Aorta (tissue), 5 donors: ENCODE measurements at regions of chr7 and their contacts with region 1.

Region 1: GRCh38 chr7:151759591-151760042 is 117.3 kb downstream of the PRKAG2 start:
- DNase-seq: no peak
- ATAC-seq: peak; percentile 80
- H3K4me3 ChIP-seq: no peak overlapping the region
- H3K27ac ChIP-seq: no peak overlapping the region
- H3K4me1 ChIP-seq: no peaks in the 10 kb centered on the region
- H3K27me3 ChIP-seq: no peaks in the 10 kb centered on the region

Region 2: DNA sequence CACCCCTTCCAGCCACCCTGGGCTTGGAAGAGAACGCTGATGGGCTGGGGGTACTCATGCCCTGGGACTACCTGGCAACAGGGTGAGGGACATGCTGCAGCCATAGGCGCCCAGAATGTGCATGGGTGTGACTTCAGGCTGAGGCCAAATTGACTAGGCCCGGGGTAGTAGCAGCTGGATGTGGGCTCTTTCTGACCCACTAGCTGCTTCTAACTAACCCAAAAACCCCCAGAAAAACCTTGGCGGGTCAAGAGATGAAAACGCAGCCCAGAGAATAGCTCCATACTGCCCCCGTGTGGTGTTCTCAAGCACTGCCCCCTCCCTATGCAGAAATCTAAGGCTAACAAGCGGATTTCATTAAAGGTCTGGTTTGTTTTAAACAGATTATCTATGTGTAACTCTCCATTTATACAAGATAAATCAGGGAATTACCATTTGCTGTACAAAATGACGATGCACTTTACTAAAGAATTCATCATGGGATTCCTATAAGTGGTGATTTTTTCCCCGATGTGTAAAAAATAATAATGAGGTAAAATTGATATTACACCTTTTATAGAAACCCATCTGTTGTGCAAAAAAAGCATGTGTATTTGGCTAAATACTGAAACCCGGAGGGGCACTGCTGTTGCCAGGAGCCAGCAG is 515.3 kb before region 1 on chr7:
- intact Hi-C with region 1: loop called in 1 of 2 experiments (anchors 10 kb)
- DNase-seq: peak in 1 of 2 donors; percentile 79
- ATAC-seq: no peak
- H3K4me3 ChIP-seq: no peak overlapping the region
- H3K27ac ChIP-seq: no peak overlapping the region
- H3K4me1 ChIP-seq: no peaks in the 10 kb centered on the region
- H3K27me3 ChIP-seq: no peaks in the 10 kb centered on the region

Region 3: GRCh38 chr7:151459726-151460473 is 299.7 kb before region 1 on chr7:
- intact Hi-C with region 1: loop called in 1 of 2 experiments (anchors 5 kb)
- DNase-seq: peak; percentile 85 to 93
- ATAC-seq: peak; percentile 93
- H3K4me3 ChIP-seq: no peak overlapping the region
- H3K27ac ChIP-seq: peak overlapping the region in 1 of 2 donors; percentile 85
- H3K4me1 ChIP-seq: no peaks in the 10 kb centered on the region
- H3K27me3 ChIP-seq: no peaks in the 10 kb centered on the region

Region 4: GRCh38 chr7:151570366-151570915 is 189.2 kb before region 1 on chr7:
- intact Hi-C with region 1: loop called (anchors 5 kb)
- DNase-seq: no peak
- ATAC-seq: no peak
- H3K4me3 ChIP-seq: no peak overlapping the region
- H3K27ac ChIP-seq: no peak overlapping the region
- H3K4me1 ChIP-seq: no peaks in the 10 kb centered on the region
- H3K27me3 ChIP-seq: no peaks in the 10 kb centered on the region

Region 5: GRCh38 chr7:151631968-151632749 is 127.5 kb before region 1 on chr7:
- intact Hi-C with region 1: loop called (anchors 5 kb)
- DNase-seq: peak; percentile 89 to 94
- ATAC-seq: peak; percentile 88
- H3K4me3 ChIP-seq: peak overlapping the region; percentile 96
- H3K27ac ChIP-seq: peak overlapping the region; percentile 87 to 98
- H3K4me1 ChIP-seq: peaks cover 0 to 6% of the 10 kb centered on the region in 2 donors
- H3K27me3 ChIP-seq: no peaks in the 10 kb centered on the region

Region 6: DNA sequence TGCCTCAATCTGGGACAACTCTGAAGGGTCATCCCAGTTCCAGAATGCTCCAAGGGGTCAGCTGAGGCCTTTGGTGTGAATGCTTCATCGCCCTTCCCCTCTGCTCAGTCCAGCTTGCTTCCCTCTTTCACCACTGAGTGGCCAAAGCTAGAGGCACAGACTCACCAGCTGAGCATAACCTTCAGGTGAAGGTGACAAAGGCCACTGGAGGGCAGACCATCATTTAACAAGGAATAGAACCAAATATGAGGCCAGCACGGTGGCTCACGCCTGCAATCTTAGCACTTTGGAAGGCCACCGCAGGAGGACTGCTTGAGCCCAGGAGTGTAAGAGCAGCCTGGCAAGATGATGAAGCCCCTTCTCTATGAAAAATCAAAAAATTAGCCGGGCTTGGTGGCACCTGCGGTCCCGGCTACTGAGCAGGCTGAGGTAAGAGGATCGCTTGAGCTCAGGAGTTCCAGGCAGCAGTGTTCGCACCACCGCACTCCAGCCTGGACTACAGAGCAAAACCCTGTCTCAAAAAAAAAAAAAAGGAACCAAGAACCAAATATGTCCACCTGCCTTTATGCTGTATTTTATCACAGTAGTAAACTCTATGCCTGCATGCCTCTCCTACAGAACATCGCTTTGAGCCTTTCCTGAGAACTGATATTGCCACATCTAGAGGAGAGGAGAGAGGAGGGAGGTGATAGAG is 103.9 kb after region 1 on chr7:
- intact Hi-C with region 1: no loop called
- DNase-seq: peak; percentile 22 to 35
- ATAC-seq: no peak
- H3K4me3 ChIP-seq: no peak overlapping the region
- H3K27ac ChIP-seq: no peak overlapping the region
- H3K4me1 ChIP-seq: no peaks in the 10 kb centered on the region
- H3K27me3 ChIP-seq: no peaks in the 10 kb centered on the region